Heart left ventricle (tissue), 16 donors: ENCODE measurements at regions of chr11 and their contacts with region 1.

Region 1: DNA sequence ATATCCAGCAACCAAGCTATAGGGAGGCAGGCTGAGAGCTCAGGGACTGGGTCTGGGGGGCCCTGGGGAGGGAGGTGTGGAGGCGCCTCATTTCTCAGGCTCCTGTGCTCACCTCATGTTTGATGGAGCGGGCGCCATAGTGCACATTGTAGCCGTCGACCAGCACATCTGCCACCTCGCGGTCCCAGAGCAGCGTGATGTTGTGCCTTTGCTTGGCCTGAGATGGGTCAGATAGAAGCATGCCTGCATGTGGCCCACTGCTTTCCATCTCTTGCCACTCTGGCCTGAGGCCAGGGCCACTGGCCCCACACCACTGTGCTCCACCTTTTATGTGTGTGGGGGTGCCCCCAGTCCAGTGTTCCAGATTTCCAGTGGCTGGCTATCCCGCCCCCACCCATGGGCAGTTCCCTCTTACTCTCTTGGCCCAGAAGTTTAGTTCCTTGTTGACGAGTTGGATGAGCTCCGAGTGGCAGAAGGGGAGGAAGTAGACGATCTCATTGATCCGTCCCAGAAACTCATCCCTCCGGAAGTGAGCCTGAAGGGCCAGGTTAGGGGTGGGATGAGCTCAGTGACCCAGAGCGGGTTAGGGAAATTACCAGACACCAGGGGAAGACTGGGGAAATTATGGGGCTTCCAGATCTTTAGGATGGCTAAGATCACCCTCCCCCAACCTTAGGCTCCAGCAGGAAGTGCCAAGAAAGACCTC is 50.1 kb upstream of the PHOX2A start:
- DNase-seq: no peak
- ATAC-seq: peak in 2 of 4 donors; percentile 13 to 28
- H3K4me3 ChIP-seq: no peak overlapping the region
- H3K27ac ChIP-seq: no peak overlapping the region
- H3K4me1 ChIP-seq: no peaks in the 10 kb centered on the region
- H3K27me3 ChIP-seq: no peaks in the 10 kb centered on the region
- CTCF ChIP-seq: no peak
- POLR2A ChIP-seq: no peak

Region 2: DNA sequence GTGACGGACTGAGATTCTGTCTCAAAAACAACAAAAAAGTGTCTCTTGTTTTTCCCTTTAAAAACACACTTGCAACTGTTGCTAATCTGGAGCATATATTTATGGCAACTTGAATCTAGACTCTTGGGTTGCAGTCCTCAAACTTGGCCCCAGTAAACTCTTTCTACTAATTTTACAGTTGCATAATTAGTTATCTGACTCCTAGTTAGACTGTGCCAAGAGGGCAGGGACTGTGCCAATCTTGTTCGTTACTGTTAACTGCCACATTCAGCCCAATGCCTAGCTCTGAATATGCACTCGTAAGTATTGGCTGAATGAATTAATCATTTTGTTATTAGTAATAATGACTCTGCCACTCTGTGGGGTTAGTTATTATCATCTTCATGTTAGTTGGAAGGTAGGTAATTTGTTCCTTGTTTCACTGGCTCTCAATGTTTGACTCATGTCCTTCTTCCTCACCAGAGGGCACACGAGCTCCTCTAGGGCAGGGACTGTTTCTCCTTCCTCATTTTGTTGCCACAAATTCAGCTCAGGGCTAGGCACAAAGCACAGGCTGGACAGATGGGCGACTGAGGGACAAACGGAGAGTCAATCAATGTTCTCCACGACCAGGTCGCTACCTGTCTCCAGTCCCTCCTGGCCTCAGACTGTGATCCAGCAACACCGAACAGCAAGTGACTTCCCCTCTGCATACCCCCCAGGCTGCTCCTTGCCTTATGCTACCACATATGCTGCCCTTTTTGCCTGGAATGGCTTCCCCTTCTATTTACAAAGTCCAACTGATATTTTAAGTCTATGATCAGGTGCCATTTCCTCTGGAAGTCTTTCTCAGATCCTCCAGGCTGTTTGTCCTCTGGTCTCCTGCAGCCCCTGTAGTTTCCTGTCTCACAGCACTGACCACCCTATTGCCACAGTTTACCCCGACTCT is 131.3 kb after region 1 on chr11:
- intact Hi-C with region 1: loop called in 2 of 10 experiments (anchors 5 kb)
- DNase-seq: no peak
- ATAC-seq: peak in 3 of 4 donors; percentile 50 to 72 (median 62)
- H3K4me3 ChIP-seq: no peak overlapping the region
- H3K27ac ChIP-seq: no peak overlapping the region
- H3K4me1 ChIP-seq: peaks cover 0 to 17% (median 0%) of the 10 kb centered on the region in 12 donors
- H3K27me3 ChIP-seq: no peaks in the 10 kb centered on the region
- CTCF ChIP-seq: no peak
- POLR2A ChIP-seq: no peak

Region 3: DNA sequence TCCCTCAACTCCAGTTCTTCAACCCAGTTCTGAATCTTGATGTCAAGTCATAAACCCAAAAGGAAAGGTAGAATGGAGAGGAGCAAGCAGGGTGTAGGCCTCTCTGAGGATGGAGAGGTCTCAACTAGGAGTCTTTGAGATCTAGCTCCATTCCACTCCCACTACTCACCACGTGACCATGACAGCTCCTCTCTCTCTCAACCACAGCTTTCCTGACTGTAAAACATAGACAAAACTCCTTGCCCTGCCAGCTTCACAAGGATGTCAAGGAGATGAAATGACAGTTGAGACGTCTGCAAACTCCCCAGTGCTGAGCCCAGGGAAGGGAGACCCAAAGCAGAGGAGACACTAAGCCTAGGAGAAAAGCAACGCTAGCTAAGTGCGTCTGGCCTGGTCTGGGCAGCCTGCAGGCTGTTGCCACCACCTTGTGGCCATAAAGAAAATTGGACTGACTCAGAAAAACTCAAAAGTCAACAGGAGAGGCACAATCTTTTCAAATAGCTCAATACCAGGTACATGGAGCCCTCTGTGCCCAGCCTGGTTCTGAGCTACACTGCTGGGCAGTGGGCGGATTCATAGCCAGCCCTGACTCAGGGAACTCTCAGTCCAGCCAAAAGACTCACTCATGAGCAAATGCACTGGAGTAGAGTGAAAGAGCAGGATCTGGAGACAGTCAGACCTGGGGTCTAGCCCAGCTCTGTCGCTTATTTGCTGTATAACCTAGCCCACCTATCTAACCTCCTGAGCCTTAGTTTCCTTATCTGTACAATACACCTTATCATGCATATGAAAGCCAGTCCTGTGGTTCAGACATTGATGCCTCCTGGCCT is 136.9 kb after region 1 on chr11:
- intact Hi-C with region 1: loop called in 2 of 10 experiments (anchors 5 kb)
- DNase-seq: peak in 3 of 5 donors; percentile 44 to 49 (median 46)
- ATAC-seq: peak in 2 of 4 donors; percentile 16 to 31
- H3K4me3 ChIP-seq: no peak overlapping the region
- H3K27ac ChIP-seq: no peak overlapping the region
- H3K4me1 ChIP-seq: peaks cover 0 to 41% (median 14%) of the 10 kb centered on the region in 12 donors
- H3K27me3 ChIP-seq: no peaks in the 10 kb centered on the region
- CTCF ChIP-seq: peak; percentile 61 to 81 (median 72)
- POLR2A ChIP-seq: no peak